Activated CD4-positive, alpha-beta T cell treated with anti-CD3 and anti-CD28 coated beads for 36 hours (primary cell): ENCODE measurements at regions of chr4 and their contacts with region 1.

Region 1: GRCh38 chr4:182465979-182466378 is 222.8 kb downstream of the TENM3 start:
- DNase-seq: no peak
- ATAC-seq: no peak
- H3K4me3 Mint-ChIP-seq: no peak overlapping the region
- H3K27ac Mint-ChIP-seq: no peak overlapping the region
- H3K4me1 Mint-ChIP-seq: no peaks in the 10 kb centered on the region
- H3K27me3 Mint-ChIP-seq: peaks cover 3% of the 10 kb centered on the region

Region 2: GRCh38 chr4:183596067-183596757 is 1130.2 kb after region 1 on chr4:
- CTCF ChIA-PET with region 1: no interaction called
- POLR2A ChIA-PET with region 1: interaction called, 13 read pairs
- intact Hi-C with region 1: no loop called
- DNase-seq: no peak
- ATAC-seq: no peak
- H3K4me3 Mint-ChIP-seq: no peak overlapping the region
- H3K27ac Mint-ChIP-seq: no peak overlapping the region
- H3K4me1 Mint-ChIP-seq: no peaks in the 10 kb centered on the region
- H3K27me3 Mint-ChIP-seq: peaks cover 5% of the 10 kb centered on the region